GM12878 (cell line): ENCODE measurements at regions of chr7 and their contacts with region 1.

Region 1: GRCh38 chr7:148962823-148963582 is 65.3 kb downstream of the PDIA4 start:
- DNase-seq: peak; percentile 68
- ATAC-seq: peak; percentile 80
- H3K4me3 ChIP-seq: peak overlapping the region; percentile 61
- H3K27ac ChIP-seq: peak overlapping the region; percentile 54
- H3K4me1 ChIP-seq: no peaks in the 10 kb centered on the region; the same call in 1 of the 2 replicates
- H3K27me3 ChIP-seq: peaks cover 0 to 3% of the 10 kb centered on the region in 2 experiments; a peak in 2 of 4 replicates
- CTCF ChIP-seq: peak; percentile 60 to 97 (median 95); a peak in 5 of 6 replicates
- EP300 ChIP-seq: no peak
- POLR2A ChIP-seq: no peak
- RAD21 ChIP-seq: peak; percentile 97

Region 2: GRCh38 chr7:148503875-148504487 is 459.0 kb before region 1 on chr7:
- CTCF ChIA-PET with region 1: interaction called, 22 read pairs
- POLR2A ChIA-PET with region 1: interaction called, 6 read pairs
- RAD21 ChIA-PET with region 1: interaction called, 5 read pairs
- SMC1A ChIA-PET with region 1: interaction called, 17 read pairs
- in situ Hi-C with region 1: loop called (anchors 5 kb)
- intact Hi-C with region 1: loop called (anchors 1 kb)
- DNase-seq: no peak
- ATAC-seq: no peak
- H3K4me3 ChIP-seq: no peak overlapping the region
- H3K27ac ChIP-seq: no peak overlapping the region
- H3K4me1 ChIP-seq: peaks cover 53% of the 10 kb centered on the region
- H3K27me3 ChIP-seq: no peaks in the 10 kb centered on the region
- CTCF ChIP-seq: peak; percentile 53 to 75 (median 66); a peak in 5 of 6 replicates
- EP300 ChIP-seq: no peak
- POLR2A ChIP-seq: no peak
- RAD21 ChIP-seq: peak; percentile 88

Region 3: DNA sequence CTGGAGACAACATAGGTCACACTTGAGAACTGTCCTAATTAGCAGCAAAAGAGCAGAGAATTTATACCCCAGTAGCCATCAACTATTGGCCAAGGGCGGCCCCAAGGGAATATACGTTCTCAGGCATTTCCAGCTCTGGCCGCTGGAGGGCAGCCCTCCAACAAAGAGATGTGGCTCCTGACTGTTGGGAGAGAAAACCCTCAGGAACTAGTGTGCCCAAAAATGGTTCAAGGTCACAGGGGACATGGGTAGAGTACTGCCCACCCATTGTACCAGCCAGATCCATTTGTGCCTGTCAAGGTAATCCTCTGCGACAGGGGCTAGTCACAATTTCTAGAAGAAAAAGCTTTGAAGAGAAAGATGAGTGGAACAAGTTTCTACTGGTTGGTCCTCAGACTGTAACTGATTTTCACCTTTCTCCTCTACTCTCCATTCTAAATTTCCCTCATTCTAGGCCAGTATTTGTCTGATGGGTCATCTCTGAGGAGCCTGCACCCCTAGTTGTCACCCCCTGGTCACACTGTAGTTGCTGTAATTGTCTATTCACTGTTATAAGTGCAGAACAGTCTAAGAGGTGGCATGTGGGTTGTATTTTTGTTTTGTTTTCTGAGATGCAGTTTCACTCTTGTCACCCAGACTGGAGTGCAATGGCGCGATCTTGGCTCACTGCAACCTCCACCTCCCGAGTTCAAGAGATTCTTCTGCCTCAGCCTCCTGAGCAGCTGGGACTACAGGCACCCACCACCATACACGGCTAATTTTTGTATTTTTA is 387.2 kb before region 1 on chr7:
- CTCF ChIA-PET with region 1: interaction called, 57 read pairs
- POLR2A ChIA-PET with region 1: no interaction called
- RAD21 ChIA-PET with region 1: interaction called, 29 read pairs
- SMC1A ChIA-PET with region 1: interaction called, 17 read pairs
- in situ Hi-C with region 1: loop called (anchors 5 kb)
- intact Hi-C with region 1: loop called (anchors 1 kb)
- DNase-seq: no peak
- ATAC-seq: peak; percentile 98
- H3K4me3 ChIP-seq: no peak overlapping the region
- H3K27ac ChIP-seq: no peak overlapping the region
- H3K4me1 ChIP-seq: no peaks in the 10 kb centered on the region
- H3K27me3 ChIP-seq: no peaks in the 10 kb centered on the region; a peak in 1 of 4 replicates
- CTCF ChIP-seq: peak; percentile 83 to 86 (median 86)
- EP300 ChIP-seq: no peak
- POLR2A ChIP-seq: no peak
- RAD21 ChIP-seq: peak; percentile 85

Region 4: DNA sequence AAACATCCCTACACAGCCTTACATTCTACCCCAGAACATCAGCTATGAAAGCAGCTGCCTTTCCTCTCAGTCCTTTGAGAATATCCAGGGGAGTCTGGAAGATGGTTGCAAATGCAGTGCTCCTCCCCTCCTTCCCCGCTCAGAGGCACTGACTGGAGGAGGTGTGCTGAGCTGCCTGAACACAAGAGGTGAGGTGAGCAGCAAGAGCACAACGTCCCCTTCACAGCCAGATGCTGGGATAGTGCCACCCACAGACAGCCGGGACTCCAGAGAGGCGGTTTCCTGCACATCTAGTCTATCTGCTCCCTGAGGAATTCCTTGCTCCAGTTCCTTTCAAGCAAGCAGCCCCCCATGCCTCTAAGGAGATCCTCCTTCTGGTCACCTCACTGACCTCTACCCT is 153.1 kb before region 1 on chr7:
- CTCF ChIA-PET with region 1: interaction called, 3 read pairs
- POLR2A ChIA-PET with region 1: interaction called, 8 read pairs
- RAD21 ChIA-PET with region 1: no interaction called
- SMC1A ChIA-PET with region 1: no interaction called
- in situ Hi-C with region 1: no loop called
- intact Hi-C with region 1: loop called (anchors 10 kb)
- DNase-seq: no peak
- ATAC-seq: no peak
- H3K4me3 ChIP-seq: no peak overlapping the region
- H3K27ac ChIP-seq: no peak overlapping the region
- H3K4me1 ChIP-seq: no peaks in the 10 kb centered on the region
- H3K27me3 ChIP-seq: no peaks in the 10 kb centered on the region
- CTCF ChIP-seq: no peak
- EP300 ChIP-seq: no peak
- POLR2A ChIP-seq: no peak
- RAD21 ChIP-seq: no peak

Region 5: GRCh38 chr7:148856891-148857290 is 106.1 kb before region 1 on chr7:
- CTCF ChIA-PET with region 1: interaction called, 13 read pairs
- POLR2A ChIA-PET with region 1: interaction called, 3 read pairs
- RAD21 ChIA-PET with region 1: interaction called, 21 read pairs
- SMC1A ChIA-PET with region 1: interaction called, 5 read pairs
- in situ Hi-C with region 1: no loop called
- intact Hi-C with region 1: loop called (anchors 1 kb)
- DNase-seq: no peak
- ATAC-seq: peak; percentile 76
- H3K4me3 ChIP-seq: no peak overlapping the region
- H3K27ac ChIP-seq: no peak overlapping the region
- H3K4me1 ChIP-seq: peaks cover 14% of the 10 kb centered on the region
- H3K27me3 ChIP-seq: no peaks in the 10 kb centered on the region
- CTCF ChIP-seq: no peak
- EP300 ChIP-seq: no peak
- POLR2A ChIP-seq: no peak
- RAD21 ChIP-seq: no peak

Region 6: DNA sequence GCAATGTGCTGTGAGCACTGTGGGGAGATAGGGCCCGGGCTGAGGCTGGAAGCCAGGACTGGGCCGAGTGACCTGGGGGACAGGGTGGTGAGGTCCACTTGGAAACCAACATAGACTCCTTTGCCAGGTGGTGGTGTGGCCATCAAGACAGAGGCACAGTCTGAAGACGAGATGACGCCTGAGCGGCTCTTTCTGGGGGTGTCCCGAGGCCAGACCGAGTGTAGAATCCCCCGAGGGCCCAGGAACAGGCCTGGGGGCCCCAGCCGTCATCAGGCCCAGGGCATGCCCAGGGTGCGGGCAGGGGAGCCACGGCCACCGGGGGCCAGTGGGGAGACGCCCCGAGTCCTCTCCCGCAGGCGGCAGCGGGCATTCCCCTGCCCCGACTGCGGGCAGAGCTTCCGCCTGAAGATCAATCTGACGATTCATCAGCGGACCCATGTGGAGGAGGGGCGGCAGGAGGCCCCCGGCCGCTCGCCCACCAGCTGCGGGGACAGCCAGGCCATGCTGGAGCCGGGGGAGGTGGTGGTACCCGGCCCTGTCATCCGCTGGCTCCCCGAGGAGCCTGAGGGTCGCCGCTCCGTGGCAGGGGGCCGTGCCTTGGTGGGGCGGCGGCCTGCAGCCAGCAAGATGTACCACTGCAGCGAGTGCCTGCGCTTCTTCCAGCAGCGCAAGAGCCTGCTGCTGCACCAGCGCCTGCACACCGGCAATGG is 318.5 kb after region 1 on chr7:
- CTCF ChIA-PET with region 1: no interaction called
- POLR2A ChIA-PET with region 1: no interaction called
- RAD21 ChIA-PET with region 1: no interaction called
- SMC1A ChIA-PET with region 1: no interaction called
- in situ Hi-C with region 1: no loop called
- intact Hi-C with region 1: no loop called
- DNase-seq: no peak
- ATAC-seq: no peak
- H3K4me3 ChIP-seq: no peak overlapping the region
- H3K27ac ChIP-seq: no peak overlapping the region
- H3K4me1 ChIP-seq: peaks cover 12% of the 10 kb centered on the region
- H3K27me3 ChIP-seq: no peaks in the 10 kb centered on the region
- CTCF ChIP-seq: no peak
- EP300 ChIP-seq: no peak
- POLR2A ChIP-seq: no peak
- RAD21 ChIP-seq: no peak